ENCODE measurements at regions of chr9 and their contacts with region 1.

Region 1: GRCh38 chr9:35923927-35924763 is 14.9 kb downstream of the SPAAR start:
- DNase-seq: no peak
- H3K4me3 ChIP-seq: no peak overlapping the region
- H3K4me3 Mint-ChIP-seq: no peak overlapping the region
- H3K27ac ChIP-seq: no peak overlapping the region
- H3K27ac Mint-ChIP-seq: peak overlapping the region in 1 of 7 donors; percentile 37
- H3K4me1 ChIP-seq: no peaks in the 10 kb centered on the region
- H3K4me1 Mint-ChIP-seq: peaks cover 0 to 16% (median 3%) of the 10 kb centered on the region in 4 donors
- H3K27me3 ChIP-seq: no peaks in the 10 kb centered on the region
- H3K27me3 Mint-ChIP-seq: no peaks in the 10 kb centered on the region

Region 2: DNA sequence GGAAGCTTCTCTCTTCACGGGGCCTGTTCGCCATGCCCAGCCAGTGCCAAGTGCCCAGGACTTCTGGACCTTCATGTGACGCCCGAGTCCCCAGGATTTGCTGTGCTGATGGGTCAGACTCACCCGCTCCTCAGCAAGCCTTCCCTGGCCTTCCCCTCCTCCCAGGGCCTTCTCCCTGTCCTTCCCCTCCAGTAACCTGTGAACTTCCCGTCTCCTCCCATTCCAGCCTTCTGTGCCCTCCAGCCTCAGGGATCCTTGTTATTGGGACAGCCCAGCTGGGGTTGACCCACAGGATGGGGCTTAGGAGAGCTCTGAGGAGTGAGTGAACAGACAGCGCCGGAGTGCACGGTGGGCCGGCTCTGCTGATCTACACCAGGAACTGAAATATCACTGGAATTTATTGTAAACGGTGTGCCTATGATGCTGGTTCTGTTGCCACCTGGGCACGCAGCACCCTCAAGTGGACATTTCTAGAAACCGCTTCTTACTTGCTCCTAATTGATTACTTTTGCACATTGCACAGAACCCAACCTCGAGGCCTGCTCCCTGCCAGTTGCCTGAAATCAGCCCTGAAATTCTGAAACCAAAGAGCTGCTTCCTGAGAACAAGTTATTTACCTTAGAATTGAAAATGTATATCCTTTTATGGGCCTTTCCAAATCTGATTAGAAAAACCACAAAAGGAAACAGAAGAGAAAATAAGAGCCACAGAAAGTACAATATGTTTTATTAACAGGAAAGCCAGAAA is 13.4 kb before region 1 on chr9:
- CTCF ChIA-PET with region 1: interaction called, 16 read pairs
- POLR2A ChIA-PET with region 1: interaction called, 8 read pairs
- intact Hi-C with region 1: no loop called
- DNase-seq: peak; percentile 56 to 77 (median 69)
- H3K4me3 ChIP-seq: peak overlapping the region in 1 of 2 donors; percentile 20
- H3K4me3 Mint-ChIP-seq: peak overlapping the region; percentile 7 to 88 (median 76)
- H3K27ac ChIP-seq: peak overlapping the region; percentile 30
- H3K27ac Mint-ChIP-seq: peak overlapping the region; percentile 78 to 97 (median 96)
- H3K4me1 ChIP-seq: peaks cover 68% of the 10 kb centered on the region
- H3K4me1 Mint-ChIP-seq: peaks cover 41 to 64% (median 55%) of the 10 kb centered on the region in 4 donors
- H3K27me3 ChIP-seq: no peaks in the 10 kb centered on the region
- H3K27me3 Mint-ChIP-seq: no peaks in the 10 kb centered on the region

Region 3: GRCh38 chr9:35945341-35946018 is 21.3 kb after region 1 on chr9:
- CTCF ChIA-PET with region 1: interaction called, 50 read pairs
- POLR2A ChIA-PET with region 1: interaction called, 3 read pairs
- intact Hi-C with region 1: no loop called
- DNase-seq: peak; percentile 43 to 58 (median 55)
- H3K4me3 ChIP-seq: no peak overlapping the region
- H3K4me3 Mint-ChIP-seq: peak overlapping the region in 7 of 8 donors; percentile 26 to 74 (median 61)
- H3K27ac ChIP-seq: no peak overlapping the region
- H3K27ac Mint-ChIP-seq: peak overlapping the region; percentile 3 to 82 (median 58)
- H3K4me1 ChIP-seq: peaks cover 70% of the 10 kb centered on the region
- H3K4me1 Mint-ChIP-seq: peaks cover 43 to 72% (median 65%) of the 10 kb centered on the region in 4 donors
- H3K27me3 ChIP-seq: no peaks in the 10 kb centered on the region
- H3K27me3 Mint-ChIP-seq: no peaks in the 10 kb centered on the region